ENCODE measurements at regions of chr1 and their contacts with region 1.

Region 1: DNA sequence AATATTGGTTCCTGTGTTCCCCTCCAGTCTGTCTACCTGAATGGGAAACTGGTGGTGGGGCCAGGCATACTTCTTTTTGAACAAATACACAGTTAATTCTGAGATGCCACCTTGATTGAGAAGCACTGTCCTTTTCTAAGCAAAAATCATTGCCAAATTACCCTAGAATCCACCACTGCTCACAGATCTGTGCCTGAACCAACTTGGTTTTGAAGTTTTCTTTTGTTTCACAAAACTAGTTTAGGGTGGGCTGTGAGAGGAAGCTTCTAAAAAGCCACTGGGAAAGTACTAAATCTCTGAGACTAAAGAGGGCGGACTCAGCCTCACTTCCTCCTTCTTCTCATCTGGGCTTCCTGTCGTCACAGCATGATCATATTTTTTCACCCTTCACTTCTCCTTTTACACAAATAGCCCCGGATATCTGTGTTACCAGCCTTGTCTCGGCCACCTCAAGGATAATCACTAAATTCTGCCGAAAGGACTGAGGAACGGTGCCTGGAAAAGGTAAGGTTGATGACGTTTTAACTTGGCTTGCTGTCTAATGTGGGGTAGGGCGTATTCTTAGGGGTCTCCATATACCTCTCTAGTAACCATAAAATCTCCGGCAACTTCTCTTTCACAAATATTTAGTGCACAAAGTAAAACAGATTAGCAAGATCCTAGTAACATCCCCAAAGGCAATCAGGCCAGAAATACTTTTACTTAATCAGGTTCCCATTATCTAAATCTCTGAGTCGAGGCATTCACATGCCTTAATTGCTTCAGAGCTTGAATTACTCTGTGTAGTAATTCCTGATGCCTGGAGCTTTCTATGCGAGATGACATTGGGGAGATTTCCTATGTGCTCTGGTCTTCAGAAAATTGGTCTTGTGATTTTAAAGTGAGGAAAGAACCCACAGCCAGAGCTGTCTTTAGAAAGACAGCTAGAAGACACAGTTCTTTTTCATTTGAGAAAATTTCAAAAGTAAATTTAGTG is at the start of gene CD53:
- DNase-seq: peak; percentile 63
- H3K4me3 Mint-ChIP-seq: peak within 1 kb of the TSS; percentile 98
- H3K27ac Mint-ChIP-seq: peak within 1 kb of the TSS; percentile 99
- H3K4me1 Mint-ChIP-seq: peaks cover 37% of the 10 kb centered on the region
- H3K27me3 Mint-ChIP-seq: no peaks in the 10 kb centered on the region
- total RNA-seq, gene CD53: 240 to 246 TPM

Region 2: GRCh38 chr1:110548381-110548780 is 324.7 kb before region 1 on chr1:
- CTCF ChIA-PET with region 1: no interaction called
- POLR2A ChIA-PET with region 1: no interaction called
- intact Hi-C with region 1: no loop called
- DNase-seq: no peak
- H3K4me3 Mint-ChIP-seq: no peak overlapping the region
- H3K27ac Mint-ChIP-seq: no peak overlapping the region
- H3K4me1 Mint-ChIP-seq: no peaks in the 10 kb centered on the region
- H3K27me3 Mint-ChIP-seq: peaks cover 14% of the 10 kb centered on the region

Region 3: DNA sequence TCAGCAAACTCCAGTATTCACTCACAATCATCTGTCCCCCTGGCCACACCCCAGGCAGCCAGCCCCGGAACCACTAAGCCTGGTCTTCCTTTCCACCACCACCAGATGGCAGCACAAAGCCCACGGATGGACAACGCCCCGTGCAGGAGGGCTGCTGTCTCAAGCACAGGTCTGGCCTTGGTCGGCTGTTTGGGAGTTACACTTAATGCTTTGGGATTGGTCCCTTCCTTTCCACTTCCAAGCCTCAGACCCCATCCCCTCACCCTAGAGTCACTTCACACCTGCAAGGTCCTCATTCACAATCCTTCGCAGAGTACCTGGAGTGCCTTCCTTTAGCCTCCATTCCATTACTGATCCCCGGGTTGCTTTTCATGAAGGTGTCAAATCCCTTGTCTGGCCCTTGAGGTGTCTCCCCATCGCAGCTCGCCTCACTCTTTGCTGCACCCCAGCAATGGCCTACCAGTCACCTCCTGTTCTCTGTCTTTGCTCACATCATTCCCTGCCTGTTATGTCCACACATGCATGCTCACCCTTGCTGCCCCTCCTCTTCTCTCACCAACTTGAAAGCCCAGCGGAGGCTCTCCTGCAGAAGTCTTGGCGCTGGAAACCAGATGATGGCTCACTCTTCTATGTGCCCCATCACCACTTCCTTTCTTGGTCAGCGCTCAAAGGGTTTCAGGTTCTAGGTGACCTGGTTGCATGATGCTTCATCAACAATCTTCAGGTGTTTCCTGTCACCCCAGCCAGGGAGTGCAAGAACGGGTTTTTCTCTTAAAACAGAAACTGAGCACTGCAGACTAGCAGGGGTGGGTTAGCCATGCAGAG is 242.0 kb before region 1 on chr1:
- CTCF ChIA-PET with region 1: interaction called, 4 read pairs
- POLR2A ChIA-PET with region 1: interaction called, 3 read pairs
- intact Hi-C with region 1: loop called (anchors 2 kb)
- DNase-seq: peak; percentile 92
- H3K4me3 Mint-ChIP-seq: no peak overlapping the region
- H3K27ac Mint-ChIP-seq: no peak overlapping the region
- H3K4me1 Mint-ChIP-seq: peaks cover 66% of the 10 kb centered on the region
- H3K27me3 Mint-ChIP-seq: no peaks in the 10 kb centered on the region

Region 4: GRCh38 chr1:110668549-110668948 is 204.5 kb before region 1 on chr1:
- CTCF ChIA-PET with region 1: no interaction called
- POLR2A ChIA-PET with region 1: interaction called, 41 read pairs
- intact Hi-C with region 1: loop called (anchors 1 kb)
- DNase-seq: peak; percentile 14
- H3K4me3 Mint-ChIP-seq: peak overlapping the region; percentile 66
- H3K27ac Mint-ChIP-seq: peak overlapping the region; percentile 88
- H3K4me1 Mint-ChIP-seq: peaks cover 25% of the 10 kb centered on the region
- H3K27me3 Mint-ChIP-seq: no peaks in the 10 kb centered on the region

Region 5: DNA sequence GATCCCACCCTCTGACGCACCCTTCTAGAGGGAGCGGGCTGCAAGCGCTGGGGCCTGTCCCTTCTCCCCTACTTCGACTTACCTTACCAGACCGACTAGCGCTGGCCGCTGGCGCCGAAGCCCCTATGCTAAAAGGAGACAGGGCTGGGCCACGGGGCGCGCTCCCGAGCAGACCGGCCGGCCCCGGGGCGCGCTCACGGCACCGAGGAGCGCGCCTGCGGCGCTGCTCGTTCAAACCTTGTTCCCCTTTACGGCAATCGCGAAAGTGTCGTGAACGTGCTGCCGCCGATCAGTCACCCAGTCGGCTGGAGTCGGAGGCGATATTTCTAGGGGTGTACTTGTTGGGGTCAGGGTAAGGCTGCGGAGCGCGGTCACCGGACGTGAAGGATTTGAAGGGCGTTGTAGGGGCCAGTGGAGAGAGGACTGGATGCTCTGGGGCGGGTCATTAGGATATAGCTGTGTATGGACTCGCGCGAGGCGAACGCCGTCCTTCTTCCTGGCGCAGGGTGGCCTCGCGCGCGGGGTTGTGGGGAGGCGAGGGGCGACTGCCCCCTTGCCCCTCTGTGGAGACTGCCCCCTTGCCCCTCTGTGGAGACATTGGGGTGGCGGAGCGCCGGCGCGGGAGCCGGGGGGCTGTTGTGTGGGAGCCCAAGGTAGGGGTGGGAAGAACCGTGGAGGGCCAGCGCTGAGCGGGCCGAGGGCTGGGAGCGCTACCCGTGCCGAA is 267.1 kb after region 1 on chr1 and contains the starts of genes CEPT1 and DRAM2:
- CTCF ChIA-PET with region 1: no interaction called
- POLR2A ChIA-PET with region 1: interaction called, 5 read pairs
- intact Hi-C with region 1: loop called (anchors 10 kb)
- DNase-seq: peak; percentile 95
- H3K4me3 Mint-ChIP-seq: peak within 1 kb of the TSS; percentile 92
- H3K27ac Mint-ChIP-seq: peak within 1 kb of the TSS; percentile 88
- H3K4me1 Mint-ChIP-seq: peaks cover 34% of the 10 kb centered on the region
- H3K27me3 Mint-ChIP-seq: no peaks in the 10 kb centered on the region
- total RNA-seq, gene CEPT1: 23.9 to 28.8 TPM
- total RNA-seq, gene DRAM2: 30.1 to 30.5 TPM